ENCODE measurements at regions of chr20 and their contacts with region 1.

Region 1: GRCh38 chr20:62861726-62862336 is at the start of gene TCFL5:
- H3K4me3 Mint-ChIP-seq: peak within 1 kb of the TSS; percentile 56
- H3K27ac Mint-ChIP-seq: peak within 1 kb of the TSS; percentile 70
- H3K4me1 Mint-ChIP-seq: peaks cover 16% of the 10 kb centered on the region
- H3K27me3 Mint-ChIP-seq: peaks cover 22% of the 10 kb centered on the region

Region 2: DNA sequence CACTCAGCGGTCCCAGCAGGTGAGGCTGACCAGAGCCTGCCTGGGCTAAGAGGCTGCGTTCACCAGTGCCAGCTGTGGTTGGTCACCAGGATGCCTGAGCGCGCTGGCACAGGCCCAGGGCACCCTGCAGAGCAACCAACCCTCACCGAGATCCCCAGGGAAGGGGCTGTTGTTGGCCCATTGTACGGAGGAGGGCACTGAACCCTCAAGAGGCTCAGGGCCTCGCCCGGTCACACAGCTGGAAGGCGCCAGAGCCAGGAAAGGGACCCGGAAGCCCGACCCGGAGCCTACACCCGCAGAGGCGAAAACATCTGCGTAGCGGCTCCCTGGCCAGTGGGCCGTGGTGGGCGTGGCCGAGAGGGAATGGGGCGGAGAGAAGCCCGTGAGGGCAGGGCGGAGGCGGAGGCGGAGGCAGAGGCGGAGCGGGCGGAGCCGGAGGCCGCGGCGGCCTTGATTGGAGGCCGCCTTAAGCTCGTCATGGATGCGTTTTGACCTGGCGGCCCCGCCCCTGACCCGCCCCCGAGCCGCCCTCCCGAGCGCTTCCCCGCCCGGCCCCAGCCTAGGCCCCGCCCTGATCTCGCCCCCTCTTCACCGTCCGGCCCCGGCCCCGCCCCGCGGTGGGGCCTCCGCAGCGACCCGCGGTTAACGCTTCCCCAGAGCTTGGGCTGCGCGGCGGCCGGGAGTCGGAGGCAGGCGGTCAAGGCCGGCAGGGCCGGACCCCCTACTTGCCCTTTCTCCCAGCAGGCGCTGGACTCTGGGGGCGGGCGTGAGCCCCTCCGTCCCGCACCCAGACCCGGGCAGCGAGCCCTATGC is 67.7 kb before region 1 on chr20:
- intact Hi-C with region 1: no loop called
- H3K4me3 Mint-ChIP-seq: peak overlapping the region; percentile 72
- H3K27ac Mint-ChIP-seq: peak overlapping the region; percentile 92
- H3K4me1 Mint-ChIP-seq: peaks cover 57% of the 10 kb centered on the region
- H3K27me3 Mint-ChIP-seq: no peaks in the 10 kb centered on the region

Region 3: GRCh38 chr20:62953839-62954703 is 92.2 kb after region 1 on chr20:
- intact Hi-C with region 1: loop called (anchors 5 kb)
- H3K4me3 Mint-ChIP-seq: peak overlapping the region; percentile 73
- H3K27ac Mint-ChIP-seq: peak overlapping the region; percentile 88
- H3K4me1 Mint-ChIP-seq: peaks cover 86% of the 10 kb centered on the region
- H3K27me3 Mint-ChIP-seq: no peaks in the 10 kb centered on the region

Measured in dendritic cell treated with granulocyte-macrophage colony-stimulating factor and Interleukin-4, amounts not matched to agents 40 ng/mL and 50 ng/mL, for 4 days (primary cell).